Activated CD4-positive, alpha-beta T cell treated with anti-CD3 and anti-CD28 coated beads, Interleukin-2, amount 10 ng/mL, durations not matched to agents 24 days and 14 days (primary cell): ENCODE measurements at regions of chr5 and their contacts with region 1.

Region 1: DNA sequence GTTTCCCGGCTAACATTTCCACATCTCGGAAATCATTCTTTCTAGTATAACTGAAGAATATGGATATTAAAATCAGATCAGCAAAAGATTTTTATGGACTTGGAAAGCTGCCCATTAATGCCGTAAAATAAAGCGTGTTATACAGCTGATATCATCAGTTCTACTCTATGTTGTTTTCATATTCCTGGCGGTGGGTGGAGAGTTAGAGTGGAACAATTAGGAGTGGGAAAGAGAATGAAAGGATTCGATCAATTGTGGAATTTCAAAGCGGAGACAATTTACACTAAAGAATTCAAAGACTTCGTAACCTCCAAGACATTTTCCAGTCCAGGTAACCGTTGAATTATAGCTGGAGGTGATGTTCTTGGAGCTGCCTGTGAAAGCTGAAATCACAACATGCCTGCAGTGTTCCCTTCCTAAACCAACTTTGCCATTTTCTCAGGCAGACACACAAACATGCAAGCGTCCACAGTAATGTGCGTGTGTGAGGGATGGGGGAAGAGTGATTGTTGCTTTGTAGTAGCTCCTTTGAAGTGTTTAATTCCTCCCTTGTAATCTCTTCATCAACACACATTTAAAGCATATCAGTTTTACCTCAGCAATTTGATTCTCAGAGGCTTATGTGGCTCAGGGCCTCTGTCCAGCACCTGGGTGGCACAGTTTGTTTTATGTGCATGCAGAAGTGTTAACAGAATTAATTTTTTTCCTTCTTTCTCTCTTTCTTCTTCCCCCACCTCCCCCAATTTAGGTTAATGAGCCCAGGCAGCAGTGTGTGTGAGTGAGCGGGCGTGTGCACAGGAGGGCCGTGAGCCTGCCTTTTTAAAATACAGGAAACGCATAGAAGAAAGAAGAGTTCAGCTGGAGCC is 544.1 kb downstream of the RAB3C start:
- DNase-seq: no peak
- H3K4me3 Mint-ChIP-seq: no peak overlapping the region
- H3K27ac Mint-ChIP-seq: no peak overlapping the region
- H3K4me1 Mint-ChIP-seq: peaks cover 22% of the 10 kb centered on the region
- H3K27me3 Mint-ChIP-seq: no peaks in the 10 kb centered on the region

Region 2: GRCh38 chr5:59039296-59040023 is 87.5 kb before region 1 on chr5:
- intact Hi-C with region 1: loop called (anchors 1 kb)
- DNase-seq: peak; percentile 97
- H3K4me3 Mint-ChIP-seq: peak overlapping the region; percentile 92
- H3K27ac Mint-ChIP-seq: peak overlapping the region; percentile 99
- H3K4me1 Mint-ChIP-seq: peaks cover 48% of the 10 kb centered on the region
- H3K27me3 Mint-ChIP-seq: no peaks in the 10 kb centered on the region

Region 3: GRCh38 chr5:59152701-59153245 is 25.8 kb after region 1 on chr5:
- intact Hi-C with region 1: loop called (anchors 1 kb)
- DNase-seq: peak; percentile 76
- H3K4me3 Mint-ChIP-seq: no peak overlapping the region
- H3K27ac Mint-ChIP-seq: no peak overlapping the region
- H3K4me1 Mint-ChIP-seq: peaks cover 3% of the 10 kb centered on the region
- H3K27me3 Mint-ChIP-seq: no peaks in the 10 kb centered on the region

Region 4: GRCh38 chr5:59193616-59194319 is 66.8 kb after region 1 on chr5:
- intact Hi-C with region 1: no loop called
- DNase-seq: no peak
- H3K4me3 Mint-ChIP-seq: no peak overlapping the region
- H3K27ac Mint-ChIP-seq: no peak overlapping the region
- H3K4me1 Mint-ChIP-seq: peaks cover 3% of the 10 kb centered on the region
- H3K27me3 Mint-ChIP-seq: peaks cover 28% of the 10 kb centered on the region